Tibial artery (tissue), 4 donors: ENCODE measurements at regions of chr14 and their contacts with region 1.

Region 1: GRCh38 chr14:64681796-64682710 is 22.2 kb upstream of the PLEKHG3 start:
- DNase-seq: peak; percentile 83 to 96
- H3K4me3 ChIP-seq: peak overlapping the region; percentile 3 to 26
- H3K27ac ChIP-seq: peak overlapping the region; percentile 91 to 93
- H3K4me1 ChIP-seq: peaks cover 0 to 58% (median 41%) of the 10 kb centered on the region in 4 donors
- H3K27me3 ChIP-seq: no peaks in the 10 kb centered on the region
- CTCF ChIP-seq: peak in 1 of 2 experiments; percentile 25

Region 2: GRCh38 chr14:63922696-63923421 is 759.2 kb before region 1 on chr14:
- intact Hi-C with region 1: no loop called
- DNase-seq: peak in 1 of 2 donors; percentile 67
- H3K4me3 ChIP-seq: no peak overlapping the region
- H3K27ac ChIP-seq: peak overlapping the region; percentile 29 to 56
- H3K4me1 ChIP-seq: peaks cover 0 to 22% (median under 1%) of the 10 kb centered on the region in 4 donors
- H3K27me3 ChIP-seq: no peaks in the 10 kb centered on the region
- CTCF ChIP-seq: no peak

Region 3: DNA sequence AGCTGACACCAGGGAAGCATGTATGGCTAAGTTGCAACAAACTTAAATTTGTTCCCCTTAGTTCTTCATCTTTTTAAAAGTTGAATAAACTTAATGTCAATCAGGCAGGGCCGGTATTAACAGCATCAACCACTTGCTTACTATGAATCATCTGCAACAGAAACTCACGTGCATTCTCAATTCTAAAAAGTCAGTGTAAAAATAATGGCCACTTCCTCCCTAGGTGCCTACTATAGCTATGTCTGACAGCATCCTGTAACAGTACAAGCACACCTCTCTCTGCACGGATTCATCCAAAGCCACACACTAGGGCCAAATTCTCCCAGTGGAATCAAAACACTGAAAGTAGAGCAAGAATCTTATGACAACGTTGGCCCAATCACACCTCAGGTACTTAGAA is 83.6 kb before region 1 on chr14:
- intact Hi-C with region 1: no loop called
- DNase-seq: no peak
- H3K4me3 ChIP-seq: no peak overlapping the region
- H3K27ac ChIP-seq: no peak overlapping the region
- H3K4me1 ChIP-seq: no peaks in the 10 kb centered on the region
- H3K27me3 ChIP-seq: no peaks in the 10 kb centered on the region
- CTCF ChIP-seq: no peak

Region 4: DNA sequence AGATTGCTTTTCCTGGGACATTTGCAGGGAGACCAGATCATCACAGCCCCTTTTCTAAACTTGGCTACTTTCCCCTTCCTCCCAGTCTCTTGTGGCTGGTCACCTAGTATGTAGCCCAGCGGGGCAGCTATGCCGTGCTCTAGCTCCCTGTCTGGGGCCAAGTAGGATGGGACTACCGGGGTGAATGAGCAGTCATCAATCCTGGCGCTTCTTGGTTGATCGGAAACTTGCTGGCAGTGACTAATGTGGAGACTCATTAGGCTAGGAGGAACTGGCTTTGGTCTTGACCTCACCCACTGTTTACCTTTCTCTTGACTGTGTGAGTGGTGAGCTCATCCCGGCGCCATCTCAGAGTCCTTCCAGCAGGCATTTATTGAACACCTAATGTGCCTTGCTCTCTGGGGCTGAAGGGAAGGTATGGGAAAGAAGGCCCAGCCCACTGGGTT is 38.1 kb after region 1 on chr14:
- intact Hi-C with region 1: loop called (anchors 5 kb)
- DNase-seq: peak in 1 of 2 donors; percentile 65
- H3K4me3 ChIP-seq: no peak overlapping the region
- H3K27ac ChIP-seq: peak overlapping the region; percentile 88 to 91
- H3K4me1 ChIP-seq: peaks cover 9 to 99% (median 95%) of the 10 kb centered on the region in 4 donors
- H3K27me3 ChIP-seq: no peaks in the 10 kb centered on the region
- CTCF ChIP-seq: no peak

Region 5: DNA sequence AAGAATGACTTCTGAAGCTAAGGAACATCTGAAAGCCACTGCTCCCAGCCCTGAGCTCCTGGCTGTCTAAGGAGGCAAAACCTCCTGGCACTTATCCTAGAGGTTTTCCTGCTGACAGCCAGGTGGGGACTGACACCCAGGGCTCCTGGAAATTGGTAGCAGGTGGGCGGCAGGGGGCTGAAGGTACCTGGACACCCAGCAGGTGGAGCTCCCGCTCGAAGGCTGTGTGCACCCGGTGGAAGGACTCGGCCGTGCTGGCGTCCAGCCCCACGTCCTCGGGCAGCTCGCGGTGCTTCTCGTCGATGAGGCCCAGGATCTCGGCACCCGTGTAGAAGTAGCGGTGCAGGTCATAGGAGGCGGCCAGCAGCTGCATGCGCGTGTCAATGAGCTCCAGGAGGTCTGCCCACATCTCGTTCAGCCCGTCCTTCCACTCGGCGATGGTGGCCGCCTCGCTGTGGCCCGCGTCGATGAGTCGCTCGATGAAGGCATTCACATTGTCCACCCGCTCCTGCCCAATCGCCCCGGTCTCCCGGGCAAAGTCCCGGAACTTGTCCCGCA is 90.4 kb after region 1 on chr14:
- intact Hi-C with region 1: no loop called
- DNase-seq: peak in 1 of 2 donors; percentile 60
- H3K4me3 ChIP-seq: no peak overlapping the region
- H3K27ac ChIP-seq: no peak overlapping the region
- H3K4me1 ChIP-seq: no peaks in the 10 kb centered on the region
- H3K27me3 ChIP-seq: no peaks in the 10 kb centered on the region
- CTCF ChIP-seq: no peak